Activated T-helper 2 cell treated with anti-CD3 and anti-CD28 coated beads, Interferon-gamma antibody, Interleukin-2, Interleukin-4, amounts not matched to agents 10 μg/mL and 5 μg/mL and 100 μg/mL, durations not matched to agents 14 hours and 24 hours and 36 hours (primary cell): ENCODE measurements at regions of chr3 and their contacts with region 1.

Region 1: DNA sequence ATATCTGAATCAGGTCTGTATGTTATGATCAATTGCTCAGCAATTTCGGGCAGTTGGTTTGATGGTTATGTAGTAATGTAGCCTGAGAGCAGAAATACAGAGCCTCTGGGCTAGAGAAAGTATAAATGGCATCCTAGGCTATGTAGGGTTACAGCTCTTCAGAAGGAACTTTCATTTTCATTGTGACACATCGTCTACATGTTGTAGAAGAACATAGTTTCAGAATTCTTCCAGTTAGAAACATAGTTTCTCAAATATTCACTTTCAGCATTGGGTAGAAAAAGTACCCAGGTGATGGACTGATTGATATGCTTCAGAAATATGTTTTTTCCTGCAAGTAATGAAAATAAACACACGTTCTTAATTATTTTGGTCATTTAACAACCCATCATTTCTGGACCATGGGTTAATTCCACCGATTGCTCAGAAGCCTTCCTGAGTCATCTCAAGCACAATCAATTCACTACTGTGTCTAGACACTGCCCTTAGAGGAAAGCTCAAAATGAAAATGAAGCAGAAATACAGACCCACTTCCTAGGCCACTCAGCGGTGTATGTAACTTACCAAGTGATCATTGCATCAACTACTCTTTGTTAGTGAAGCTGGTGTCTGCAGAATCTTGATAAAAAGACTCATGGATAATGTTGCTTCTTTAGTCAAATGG is 88.8 kb upstream of the TSEN2 start:
- DNase-seq: peak; percentile 11
- H3K4me3 Mint-ChIP-seq: peak overlapping the region; percentile 57
- H3K27ac Mint-ChIP-seq: peak overlapping the region; percentile 75
- H3K4me1 Mint-ChIP-seq: peaks cover 21% of the 10 kb centered on the region
- H3K27me3 Mint-ChIP-seq: peaks cover 15% of the 10 kb centered on the region

Region 2: GRCh38 chr3:12287727-12288191 is 107.7 kb before region 1 on chr3:
- intact Hi-C with region 1: loop called (anchors 2 kb)
- DNase-seq: no peak
- H3K4me3 Mint-ChIP-seq: peak overlapping the region; percentile 76
- H3K27ac Mint-ChIP-seq: peak overlapping the region; percentile 42
- H3K4me1 Mint-ChIP-seq: peaks cover 18% of the 10 kb centered on the region
- H3K27me3 Mint-ChIP-seq: peaks cover 33% of the 10 kb centered on the region

Region 3: DNA sequence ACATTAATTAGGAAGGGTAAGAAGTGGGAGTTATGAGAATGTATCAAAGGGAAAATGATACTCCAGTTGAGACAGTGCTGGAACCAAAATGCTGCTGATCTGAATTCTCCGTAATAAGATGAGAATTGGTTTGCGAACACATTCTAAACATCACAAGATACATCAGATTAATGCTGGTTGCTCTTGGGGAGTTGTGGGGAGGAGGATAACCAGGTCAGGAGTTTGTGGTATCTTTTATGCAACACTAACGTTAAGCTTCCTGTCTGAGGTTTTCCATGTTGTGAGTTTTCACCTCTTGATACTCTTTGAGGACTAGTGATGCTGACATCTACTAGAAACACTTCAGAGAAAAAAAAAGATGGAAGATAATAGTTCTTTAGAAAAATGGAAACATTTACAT is 59.4 kb before region 1 on chr3:
- intact Hi-C with region 1: loop called (anchors 1 kb)
- DNase-seq: peak; percentile 11
- H3K4me3 Mint-ChIP-seq: peak overlapping the region; percentile 20
- H3K27ac Mint-ChIP-seq: peak overlapping the region; percentile 57
- H3K4me1 Mint-ChIP-seq: peaks cover 27% of the 10 kb centered on the region
- H3K27me3 Mint-ChIP-seq: peaks cover 1% of the 10 kb centered on the region

Region 4: GRCh38 chr3:12384451-12385233 is 10.8 kb before region 1 on chr3:
- intact Hi-C with region 1: loop called (anchors 1 kb)
- DNase-seq: no peak
- H3K4me3 Mint-ChIP-seq: no peak overlapping the region
- H3K27ac Mint-ChIP-seq: no peak overlapping the region
- H3K4me1 Mint-ChIP-seq: peaks cover 34% of the 10 kb centered on the region
- H3K27me3 Mint-ChIP-seq: peaks cover 12% of the 10 kb centered on the region

Region 5: GRCh38 chr3:12471243-12471651 is 75.8 kb after region 1 on chr3:
- intact Hi-C with region 1: loop called (anchors 2 kb)
- DNase-seq: no peak
- H3K4me3 Mint-ChIP-seq: peak overlapping the region; percentile 10
- H3K27ac Mint-ChIP-seq: peak overlapping the region; percentile 62
- H3K4me1 Mint-ChIP-seq: peaks cover 18% of the 10 kb centered on the region
- H3K27me3 Mint-ChIP-seq: no peaks in the 10 kb centered on the region